ENCODE measurements at regions of chr1 and their contacts with region 1.

Region 1: DNA sequence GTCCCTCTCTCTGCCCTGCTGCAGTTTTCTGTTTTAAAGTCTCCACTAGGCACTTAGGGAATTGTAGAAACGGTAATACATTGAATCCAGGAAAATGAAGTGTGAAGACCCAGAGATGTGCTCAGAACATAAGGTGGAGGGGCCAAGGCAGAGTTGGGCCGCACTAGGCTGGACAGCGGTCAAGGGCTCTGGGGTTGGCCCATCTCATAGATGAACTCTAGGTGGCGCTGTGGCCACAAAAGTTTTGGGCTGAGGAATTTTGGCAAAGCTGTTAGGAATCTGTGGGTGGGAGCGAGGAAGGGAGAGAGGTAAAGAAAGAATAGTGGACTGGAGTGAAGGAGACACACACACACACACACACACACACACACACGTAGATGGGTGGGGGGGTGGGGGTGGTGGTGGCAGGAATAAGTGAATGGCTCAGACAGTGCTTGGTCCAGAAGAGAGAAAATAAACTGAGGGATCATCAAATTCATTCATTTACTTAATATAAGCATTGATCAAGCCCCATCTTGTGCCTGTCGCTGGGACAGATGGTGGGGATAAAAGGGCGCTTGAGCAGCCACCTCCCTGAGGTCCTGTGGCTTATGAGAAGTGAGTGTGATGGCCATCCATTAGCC is 258.5 kb downstream of the TRABD2B start:
- DNase-seq: peak; percentile 39 to 55
- ATAC-seq: peak; percentile 61 to 90 (median 76)
- H3K4me3 ChIP-seq: no peak overlapping the region
- H3K27ac ChIP-seq: no peak overlapping the region
- H3K4me1 ChIP-seq: peaks cover 0 to 3% (median 0%) of the 10 kb centered on the region in 9 donors
- H3K27me3 ChIP-seq: peaks cover 0 to 47% (median 36%) of the 10 kb centered on the region in 7 donors
- CTCF ChIP-seq: peak; percentile 50 to 83 (median 75)

Region 2: DNA sequence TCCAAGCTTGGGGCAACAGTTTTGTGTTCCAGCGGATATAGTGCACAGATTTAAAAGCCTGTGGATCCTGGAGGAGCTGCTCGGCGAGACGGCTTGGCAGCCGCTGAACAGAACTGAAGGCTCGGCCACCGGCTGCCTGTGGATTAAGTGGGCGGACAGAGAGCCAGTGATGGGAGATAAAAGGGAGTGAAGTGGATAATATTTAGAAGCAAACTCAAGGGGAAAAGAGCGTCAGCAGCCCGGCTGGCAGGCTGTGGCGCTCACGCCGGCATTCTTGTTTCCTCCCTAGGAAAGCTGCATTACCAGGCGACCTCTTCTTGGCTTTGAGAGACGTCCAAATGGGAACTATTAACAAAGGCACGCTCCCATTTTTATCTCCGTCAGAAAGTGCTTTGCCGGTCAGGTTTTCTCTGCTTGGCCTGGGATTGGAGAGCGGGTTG is 248.1 kb after region 1 on chr1:
- intact Hi-C with region 1: loop called in 4 of 10 experiments (anchors 5 to 10 kb)
- DNase-seq: peak; percentile 62 to 65
- ATAC-seq: peak; percentile 68 to 89 (median 82)
- H3K4me3 ChIP-seq: peak overlapping the region in 6 of 10 donors; percentile 24 to 44 (median 30)
- H3K27ac ChIP-seq: peak overlapping the region; percentile 8 to 78 (median 55)
- H3K4me1 ChIP-seq: peaks cover 7 to 55% (median 33%) of the 10 kb centered on the region in 9 donors
- H3K27me3 ChIP-seq: peaks cover 0 to 30% (median 0%) of the 10 kb centered on the region in 7 donors
- CTCF ChIP-seq: no peak

Region 3: DNA sequence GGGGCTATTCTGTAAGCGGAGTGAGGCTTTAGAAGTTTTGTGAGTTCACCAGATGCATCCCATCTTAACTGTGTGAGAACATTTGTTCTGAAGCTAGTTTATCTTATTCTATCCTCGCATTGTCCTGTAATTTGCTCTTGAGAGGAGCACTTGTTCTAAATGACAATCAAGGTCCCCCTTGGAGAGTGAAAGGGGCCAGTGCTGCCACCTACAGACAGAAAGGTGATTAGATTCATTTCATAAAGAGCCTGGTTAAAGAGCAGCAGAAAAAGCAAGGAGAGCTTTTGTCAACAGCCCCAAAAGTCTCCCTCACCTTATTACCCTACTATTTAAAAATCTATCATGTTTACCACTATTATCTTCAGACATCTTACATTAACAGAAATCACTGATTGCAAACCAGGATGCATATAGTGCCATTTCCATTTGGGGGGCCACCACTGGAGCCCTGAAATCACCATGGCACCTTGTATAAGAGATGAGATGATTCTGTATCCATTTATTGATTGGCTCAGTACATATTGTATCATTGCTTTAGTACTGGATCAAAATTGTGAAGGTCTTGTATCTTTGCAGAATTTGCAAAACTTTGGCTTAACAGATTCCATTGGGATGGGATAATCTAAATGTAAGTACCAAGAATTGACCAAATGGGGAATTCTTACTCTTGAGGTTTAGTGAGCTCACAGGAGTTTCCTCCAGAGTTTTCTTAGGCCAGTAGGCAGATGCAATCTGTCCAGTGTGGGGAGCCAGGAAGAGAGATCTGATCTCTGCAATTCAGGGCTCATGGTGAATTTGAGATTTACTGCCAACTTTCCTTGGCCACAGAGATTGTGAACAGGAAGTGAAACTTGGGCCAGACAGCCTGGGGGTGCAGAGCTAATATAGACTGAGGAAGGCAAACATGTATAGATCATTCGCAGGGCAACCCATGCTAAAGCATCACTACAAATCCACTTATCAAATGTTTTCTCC is 322.8 kb after region 1 on chr1:
- intact Hi-C with region 1: loop called (anchors 2 to 5 kb)
- DNase-seq: peak in 1 of 2 donors; percentile 74
- ATAC-seq: peak in 6 of 8 donors; percentile 55 to 84 (median 68)
- H3K4me3 ChIP-seq: no peak overlapping the region
- H3K27ac ChIP-seq: no peak overlapping the region
- H3K4me1 ChIP-seq: peaks cover 0 to 8% (median 0%) of the 10 kb centered on the region in 9 donors
- H3K27me3 ChIP-seq: peaks cover 0 to 45% (median 6%) of the 10 kb centered on the region in 7 donors
- CTCF ChIP-seq: peak; percentile 51 to 82 (median 76)

Region 4: DNA sequence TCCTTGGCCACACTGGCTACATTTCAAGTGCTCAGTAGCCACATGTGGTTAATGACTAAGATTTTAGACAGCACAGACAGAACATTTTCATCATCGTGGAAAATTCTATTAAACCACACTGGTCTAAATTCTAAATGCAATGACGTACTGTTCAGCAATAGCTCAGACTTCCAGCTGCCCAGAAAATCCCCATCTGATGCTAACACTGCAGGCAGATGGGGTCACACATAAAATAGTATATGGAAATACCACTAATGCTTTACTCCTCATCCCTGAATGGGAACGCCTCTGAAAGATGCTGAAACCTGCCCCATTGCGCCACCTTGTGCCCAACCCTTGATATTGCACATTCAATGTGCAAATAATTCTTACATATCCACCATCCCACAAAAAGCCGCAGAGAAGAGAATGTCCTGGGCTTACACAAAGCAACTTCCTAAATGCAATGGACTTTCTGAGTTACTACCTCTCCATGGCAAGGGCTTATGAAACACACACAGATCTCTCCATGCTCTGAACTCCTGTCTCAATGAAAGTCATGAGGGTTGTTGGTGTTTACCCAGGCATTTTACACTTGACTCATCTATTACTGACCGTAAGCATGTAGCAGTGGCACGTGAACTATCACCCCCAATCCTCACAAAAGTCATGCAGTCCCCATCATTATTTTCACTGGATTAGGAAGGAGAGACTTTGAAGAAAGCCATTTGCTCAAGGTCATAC is 463.5 kb after region 1 on chr1:
- intact Hi-C with region 1: loop called in 8 of 10 experiments (anchors 2 to 10 kb)
- DNase-seq: peak; percentile 57
- ATAC-seq: peak in 7 of 8 donors; percentile 54 to 68 (median 58)
- H3K4me3 ChIP-seq: no peak overlapping the region
- H3K27ac ChIP-seq: no peak overlapping the region
- H3K4me1 ChIP-seq: peaks cover 0 to 5% (median 0%) of the 10 kb centered on the region in 9 donors
- H3K27me3 ChIP-seq: peaks cover 0 to 9% (median 0%) of the 10 kb centered on the region in 7 donors
- CTCF ChIP-seq: peak; percentile 68 to 88 (median 85)